HEK293 (cell line): ENCODE measurements at regions of chr5 and their contacts with region 1.

Region 1: GRCh38 chr5:5421961-5422818 is at the start of gene ICE1:
- H3K4me3 ChIP-seq: peak within 1 kb of the TSS; percentile 79
- H3K27ac ChIP-seq: peak within 1 kb of the TSS; percentile 85
- H3K4me1 ChIP-seq: peaks cover 15% of the 10 kb centered on the region
- CTCF ChIP-seq: peak; percentile 45; the same call in 1 of the 2 replicates

Region 2: GRCh38 chr5:4862500-4862899 is 559.7 kb before region 1 on chr5:
- CTCF ChIA-PET with region 1: interaction called, 34 read pairs
- POLR2A ChIA-PET with region 1: no interaction called
- H3K4me3 ChIP-seq: no peak overlapping the region
- H3K27ac ChIP-seq: no peak overlapping the region
- H3K4me1 ChIP-seq: no peaks in the 10 kb centered on the region
- CTCF ChIP-seq: no peak

Region 3: DNA sequence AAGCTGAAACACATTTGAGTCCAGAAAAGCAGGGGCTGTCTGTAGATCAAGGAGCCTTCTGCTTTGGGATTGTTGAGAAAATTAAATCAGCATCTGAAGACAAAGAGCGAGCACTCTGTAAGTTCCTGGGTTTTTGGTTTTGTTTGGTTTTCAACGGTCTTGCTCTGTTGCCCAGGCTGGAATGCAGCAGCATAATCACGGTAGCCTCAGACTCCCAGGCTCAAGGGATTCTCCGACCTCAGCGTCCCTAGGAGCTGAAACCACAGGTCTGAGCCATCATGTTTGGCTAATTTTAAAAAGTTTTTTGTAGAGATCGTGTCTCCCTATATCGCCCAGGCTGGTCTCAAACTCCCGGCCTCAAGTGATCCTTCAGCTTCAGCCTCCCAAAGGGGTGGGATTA is 548.5 kb before region 1 on chr5:
- CTCF ChIA-PET with region 1: interaction called, 111 read pairs
- POLR2A ChIA-PET with region 1: no interaction called
- H3K4me3 ChIP-seq: no peak overlapping the region
- H3K27ac ChIP-seq: no peak overlapping the region
- H3K4me1 ChIP-seq: no peaks in the 10 kb centered on the region
- CTCF ChIP-seq: no peak

Region 4: GRCh38 chr5:5141625-5142532 is 280.3 kb before region 1 on chr5:
- CTCF ChIA-PET with region 1: interaction called, 38 read pairs
- POLR2A ChIA-PET with region 1: interaction called, 18 read pairs
- H3K4me3 ChIP-seq: peak overlapping the region; percentile 77
- H3K27ac ChIP-seq: no peak overlapping the region
- H3K4me1 ChIP-seq: no peaks in the 10 kb centered on the region; the same call in 1 of the 2 replicates
- CTCF ChIP-seq: no peak

Region 5: GRCh38 chr5:5404381-5404780 is 17.8 kb before region 1 on chr5:
- CTCF ChIA-PET with region 1: interaction called, 22 read pairs
- POLR2A ChIA-PET with region 1: interaction called, 3 read pairs
- H3K4me3 ChIP-seq: no peak overlapping the region
- H3K27ac ChIP-seq: no peak overlapping the region
- H3K4me1 ChIP-seq: no peaks in the 10 kb centered on the region
- CTCF ChIP-seq: no peak

Region 6: GRCh38 chr5:5800801-5801761 is 378.9 kb after region 1 on chr5:
- CTCF ChIA-PET with region 1: no interaction called
- POLR2A ChIA-PET with region 1: no interaction called
- H3K4me3 ChIP-seq: no peak overlapping the region
- H3K27ac ChIP-seq: no peak overlapping the region
- H3K4me1 ChIP-seq: no peaks in the 10 kb centered on the region
- CTCF ChIP-seq: no peak